ENCODE measurements at regions of chr12 and their contacts with region 1.

Region 1: GRCh38 chr12:64403707-64404469 is at the start of gene XPOT:
- DNase-seq: peak; percentile 94 to 95
- H3K4me3 ChIP-seq: peak within 1 kb of the TSS; percentile 71 to 99 (median 90)
- H3K27ac ChIP-seq: peak within 1 kb of the TSS; percentile 95 to 96 (median 96)
- H3K4me1 ChIP-seq: peaks cover 8 to 13% of the 10 kb centered on the region in 2 donors
- H3K27me3 ChIP-seq: no peaks in the 10 kb centered on the region
- CTCF ChIP-seq: no peak
- POLR2A ChIP-seq: peak in 1 of 2 donors; percentile 86
- total RNA-seq, gene XPOT: 54.7 to 85.5 (median 63.6) TPM

Region 2: GRCh38 chr12:64451687-64452558 is 48.0 kb after region 1 on chr12 and contains the start of gene TBK1:
- intact Hi-C with region 1: loop called (anchors 5 kb)
- DNase-seq: peak; percentile 89 to 91
- H3K4me3 ChIP-seq: peak within 1 kb of the TSS; percentile 72 to 100 (median 95)
- H3K27ac ChIP-seq: peak within 1 kb of the TSS; percentile 93 to 98 (median 96)
- H3K4me1 ChIP-seq: peaks cover 0 to 17% of the 10 kb centered on the region in 2 donors
- H3K27me3 ChIP-seq: no peaks in the 10 kb centered on the region
- CTCF ChIP-seq: peak in 2 of 6 experiments; percentile 11 to 17
- POLR2A ChIP-seq: peak in 1 of 2 donors; percentile 89
- total RNA-seq, gene TBK1: 27.7 to 42.1 (median 33.4) TPM

Region 3: GRCh38 chr12:64983771-64984278 is 579.9 kb after region 1 on chr12:
- intact Hi-C with region 1: no loop called
- DNase-seq: no peak
- H3K4me3 ChIP-seq: no peak overlapping the region
- H3K27ac ChIP-seq: no peak overlapping the region
- H3K4me1 ChIP-seq: no peaks in the 10 kb centered on the region
- H3K27me3 ChIP-seq: no peaks in the 10 kb centered on the region
- CTCF ChIP-seq: no peak
- POLR2A ChIP-seq: no peak

Measured in thyroid gland (tissue), 4 donors.